GM10248 (cell line): ENCODE measurements at regions of chr12 and their contacts with region 1.

Region 1: GRCh38 chr12:26122681-26123481 is 2.0 kb downstream of the BHLHE41 start:
- DNase-seq: peak; percentile 54
- CTCF ChIP-seq: peak; percentile 56

Region 2: DNA sequence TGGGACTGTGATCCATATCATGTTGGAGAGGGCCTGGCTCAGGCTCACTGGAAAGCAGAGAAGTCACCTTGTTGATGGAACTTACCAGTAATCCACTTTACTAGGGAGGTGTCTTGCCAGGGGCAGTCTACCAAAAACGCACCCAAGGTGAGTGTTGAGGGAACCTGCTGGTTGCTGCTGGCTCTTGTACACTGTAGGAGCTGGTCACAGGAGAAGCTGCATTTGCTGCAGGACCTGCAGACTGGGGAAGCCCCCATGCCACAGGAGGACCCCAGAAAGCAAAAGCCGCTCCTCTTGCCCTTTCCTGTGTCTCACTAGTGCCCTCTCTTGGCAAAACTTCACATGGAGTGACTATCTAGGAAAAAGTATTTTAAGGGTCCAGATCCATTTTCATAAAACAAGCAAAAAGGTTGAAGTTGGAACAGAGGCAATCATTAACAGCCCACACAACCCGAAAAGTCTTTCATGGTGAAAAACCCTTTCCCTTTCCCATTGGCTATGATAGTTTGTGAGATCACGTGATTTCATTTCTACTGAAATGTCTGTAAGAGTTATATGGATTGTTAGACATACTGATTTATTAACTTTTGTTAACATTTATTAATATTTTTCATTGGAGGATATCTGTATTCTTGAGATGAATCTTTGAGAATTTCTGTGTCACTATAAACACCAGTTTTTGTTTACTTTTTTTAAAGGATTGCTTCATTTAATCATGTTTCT is 105.2 kb before region 1 on chr12:
- CTCF ChIA-PET with region 1: no interaction called
- POLR2A ChIA-PET with region 1: no interaction called
- DNase-seq: peak; percentile 33
- CTCF ChIP-seq: peak; percentile 49

Region 3: DNA sequence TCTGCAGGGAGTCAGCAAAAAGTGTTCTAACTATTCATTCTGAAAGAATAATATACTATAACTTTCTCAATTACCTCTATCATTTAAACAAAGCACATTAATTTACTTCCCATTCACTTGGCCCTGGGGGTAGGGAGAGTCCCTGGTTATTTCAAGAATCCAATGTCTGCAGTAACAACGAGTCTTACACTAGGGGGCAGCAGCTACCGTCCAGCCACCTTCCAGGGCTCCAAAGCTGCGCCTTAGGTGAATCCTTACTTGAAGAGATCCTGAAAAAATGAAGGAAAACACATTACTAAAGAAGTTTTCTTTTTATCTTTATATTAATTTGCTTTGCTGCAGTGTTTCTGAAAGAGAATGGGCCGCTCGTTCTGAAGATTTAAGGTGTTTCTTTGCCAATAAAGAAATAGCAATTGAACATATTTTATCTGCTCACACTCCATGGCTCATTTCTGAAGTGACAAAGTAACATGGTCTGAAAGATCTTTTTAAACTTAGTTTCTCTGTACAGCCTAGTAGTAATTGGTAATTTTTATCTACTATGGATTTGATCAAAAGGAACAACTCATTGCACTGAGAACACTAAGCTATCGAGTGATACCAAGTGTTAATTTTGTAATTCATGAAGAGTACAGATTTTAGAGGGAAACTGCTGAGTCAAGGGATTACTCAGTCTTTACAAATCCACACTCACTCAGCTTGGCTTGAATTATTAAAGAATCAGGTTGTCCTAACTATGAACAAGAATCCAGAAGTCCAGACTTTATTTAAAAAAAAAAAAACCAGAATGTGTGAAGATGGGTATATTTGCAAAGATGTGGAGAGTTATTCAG is 25.6 kb before region 1 on chr12:
- CTCF ChIA-PET with region 1: interaction called, 12 read pairs
- POLR2A ChIA-PET with region 1: no interaction called
- DNase-seq: peak; percentile 67
- CTCF ChIP-seq: peak; percentile 87

Region 4: GRCh38 chr12:26134540-26134939 is 11.7 kb after region 1 on chr12:
- CTCF ChIA-PET with region 1: interaction called, 13 read pairs
- POLR2A ChIA-PET with region 1: no interaction called
- DNase-seq: no peak
- CTCF ChIP-seq: no peak

Region 5: DNA sequence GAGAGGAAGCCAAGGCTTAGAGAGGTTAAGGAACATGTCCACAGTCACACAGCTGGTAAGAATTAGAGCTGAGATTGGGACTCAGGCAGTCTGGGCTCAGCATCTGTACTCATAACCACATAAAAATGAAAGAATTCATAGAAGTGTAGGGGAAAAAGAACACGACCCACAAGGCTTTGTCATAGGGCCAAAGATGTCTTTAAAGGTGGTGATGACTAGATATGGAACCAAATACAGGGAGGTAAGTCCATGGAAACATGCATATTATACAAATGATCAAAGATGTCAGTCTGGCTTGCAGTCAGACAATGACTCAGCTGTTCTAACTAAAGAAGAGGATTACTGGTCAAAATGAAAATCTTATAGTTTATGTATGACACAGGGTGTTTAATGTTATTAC is 65.2 kb after region 1 on chr12:
- CTCF ChIA-PET with region 1: no interaction called
- POLR2A ChIA-PET with region 1: no interaction called
- DNase-seq: no peak
- CTCF ChIP-seq: no peak

Region 6: DNA sequence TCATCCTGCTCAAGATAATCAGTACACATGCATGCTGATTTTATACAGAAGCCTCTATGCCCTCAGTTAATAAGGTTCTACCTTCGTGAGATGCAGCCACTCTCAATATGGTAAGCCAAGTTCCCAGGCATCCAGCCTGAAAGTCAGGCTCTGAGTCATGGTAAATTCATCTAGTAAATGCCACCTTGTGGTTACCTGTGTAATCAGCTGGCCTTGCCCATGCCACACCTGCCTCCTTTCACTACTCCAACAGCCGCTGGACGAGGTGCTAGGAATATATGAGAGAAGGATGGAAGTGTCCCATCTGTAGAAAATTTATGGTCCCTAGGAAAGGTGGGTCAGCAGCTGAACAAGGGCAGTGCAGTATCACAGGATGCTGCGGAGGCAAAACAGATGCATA is 279.8 kb after region 1 on chr12:
- CTCF ChIA-PET with region 1: no interaction called
- POLR2A ChIA-PET with region 1: no interaction called
- DNase-seq: no peak
- CTCF ChIP-seq: no peak

Region 7: DNA sequence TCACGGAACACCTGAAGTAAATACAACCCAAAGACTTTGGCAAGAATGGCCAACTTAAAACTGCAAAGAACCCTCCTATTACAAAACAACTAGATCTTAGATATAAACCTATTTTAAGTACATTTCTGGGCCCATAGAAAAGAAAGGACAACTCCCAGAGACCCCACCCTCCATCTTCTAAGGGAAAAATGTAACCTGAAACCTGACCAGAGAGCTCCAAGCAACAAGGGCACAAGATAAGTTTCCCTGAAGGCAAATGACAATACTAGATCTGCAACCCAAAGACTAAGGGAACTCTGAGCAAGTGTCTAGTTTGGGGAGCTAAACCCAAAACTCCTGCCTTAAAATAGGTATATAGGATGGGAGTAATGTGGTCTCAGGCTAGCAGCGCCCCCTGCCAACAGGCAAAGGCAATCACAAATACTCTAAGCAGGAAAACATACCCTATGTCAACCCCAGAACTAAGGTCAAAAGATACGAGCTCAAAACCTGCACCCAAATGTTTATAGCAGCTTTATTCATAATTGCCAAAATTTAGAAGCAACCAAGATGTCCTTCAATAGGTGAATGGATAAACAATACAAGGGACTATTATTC is 491.2 kb after region 1 on chr12:
- CTCF ChIA-PET with region 1: interaction called, 13 read pairs
- POLR2A ChIA-PET with region 1: no interaction called
- DNase-seq: peak; percentile 14
- CTCF ChIP-seq: peak; percentile 58